MCF 10A (cell line): ENCODE measurements at regions of chr2 and their contacts with region 1.

Region 1: DNA sequence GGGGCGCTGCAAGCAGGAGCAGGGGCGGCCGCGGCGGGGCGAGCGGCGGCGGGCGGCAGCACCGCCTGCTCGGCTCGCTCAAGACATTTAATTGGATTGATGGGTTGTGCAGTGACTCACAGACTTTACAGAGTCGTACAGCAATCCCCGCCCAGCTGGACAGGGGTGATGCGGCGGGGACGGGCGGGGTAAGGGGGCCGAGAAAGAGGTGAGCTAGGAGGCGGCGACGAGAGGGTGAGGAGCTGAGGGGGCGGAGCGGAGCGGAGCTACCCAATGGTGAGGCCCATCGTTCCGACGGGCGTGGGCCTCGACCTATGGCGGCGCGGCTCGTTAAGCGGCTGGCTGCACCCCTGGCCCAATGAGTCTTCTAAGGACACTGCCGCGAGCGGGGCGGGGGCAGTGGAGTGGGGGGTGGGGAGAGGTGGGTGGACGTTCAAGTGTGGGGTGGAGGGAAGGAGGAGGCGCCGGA is 97.1 kb upstream of the SERTAD2 start:
- DNase-seq: peak; percentile 99
- H3K4me3 Mint-ChIP-seq: peak overlapping the region; percentile 87
- H3K27ac Mint-ChIP-seq: no peak overlapping the region
- H3K4me1 Mint-ChIP-seq: peaks cover 21% of the 10 kb centered on the region
- H3K27me3 Mint-ChIP-seq: no peaks in the 10 kb centered on the region
- CTCF ChIP-seq: no peak

Region 2: DNA sequence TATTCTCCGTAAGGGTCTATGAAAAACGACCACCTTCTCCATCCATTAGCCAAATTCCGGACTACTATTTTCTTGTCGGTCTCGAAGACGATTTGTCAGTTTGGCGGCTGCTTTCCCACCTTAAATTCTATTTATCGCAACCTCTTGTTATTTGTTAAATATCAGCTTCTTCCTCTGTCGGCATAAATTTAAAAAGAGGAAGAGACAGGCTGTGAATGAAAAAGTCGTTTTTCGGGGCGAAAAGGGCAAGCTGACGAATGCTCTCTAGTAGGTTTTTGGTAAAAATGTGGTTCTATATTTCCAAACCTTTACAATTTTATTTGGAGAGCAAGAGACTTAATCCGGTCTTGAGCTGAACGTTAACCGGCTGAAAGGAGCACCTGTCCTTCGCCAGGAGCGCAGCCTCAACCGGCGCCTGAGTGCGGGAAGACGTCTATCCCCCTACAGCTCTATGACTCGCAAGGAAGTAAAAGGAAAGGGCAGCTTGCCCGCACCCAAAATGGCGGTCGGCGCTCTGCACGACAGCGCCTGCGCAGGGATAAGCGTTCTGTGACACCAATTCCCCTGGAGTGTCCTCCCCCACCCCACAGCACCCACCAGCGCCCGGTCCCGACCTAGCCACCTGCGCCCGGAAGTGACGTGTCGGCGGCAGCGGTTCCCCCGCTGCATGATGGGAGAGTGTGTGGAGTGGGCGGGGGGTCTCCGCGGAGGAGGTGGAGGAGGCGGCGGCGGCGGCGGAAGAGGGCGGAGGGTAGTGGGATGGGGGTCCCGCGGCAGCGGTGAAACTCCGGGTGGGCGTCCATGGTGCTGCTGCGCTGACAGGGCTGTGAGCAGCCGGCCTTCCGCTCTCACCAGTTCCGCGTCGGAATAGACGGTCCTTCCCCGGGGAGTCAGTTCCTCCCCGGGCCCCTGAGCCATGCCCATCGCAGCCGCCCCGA is 226.9 kb before region 1 on chr2 and contains the start of gene AFTPH:
- CTCF ChIA-PET with region 1: interaction called, 4 read pairs
- POLR2A ChIA-PET with region 1: interaction called, 44 read pairs
- intact Hi-C with region 1: loop called (anchors 10 kb)
- DNase-seq: peak; percentile 99
- H3K4me3 Mint-ChIP-seq: peak within 1 kb of the TSS; percentile 83
- H3K27ac Mint-ChIP-seq: peak within 1 kb of the TSS; percentile 94
- H3K4me1 Mint-ChIP-seq: peaks cover 8% of the 10 kb centered on the region
- H3K27me3 Mint-ChIP-seq: no peaks in the 10 kb centered on the region
- CTCF ChIP-seq: no peak
- total RNA-seq, gene AFTPH: 24.2 and 24.7 TPM in 2 replicates

Region 3: GRCh38 chr2:64644177-64645004 is 106.5 kb before region 1 on chr2:
- CTCF ChIA-PET with region 1: interaction called, 44 read pairs
- POLR2A ChIA-PET with region 1: interaction called, 724 read pairs
- intact Hi-C with region 1: loop called (anchors 1 kb)
- DNase-seq: peak; percentile 64
- H3K4me3 Mint-ChIP-seq: peak overlapping the region; percentile 78
- H3K27ac Mint-ChIP-seq: peak overlapping the region; percentile 96
- H3K4me1 Mint-ChIP-seq: peaks cover 32% of the 10 kb centered on the region
- H3K27me3 Mint-ChIP-seq: no peaks in the 10 kb centered on the region
- CTCF ChIP-seq: no peak

Region 4: DNA sequence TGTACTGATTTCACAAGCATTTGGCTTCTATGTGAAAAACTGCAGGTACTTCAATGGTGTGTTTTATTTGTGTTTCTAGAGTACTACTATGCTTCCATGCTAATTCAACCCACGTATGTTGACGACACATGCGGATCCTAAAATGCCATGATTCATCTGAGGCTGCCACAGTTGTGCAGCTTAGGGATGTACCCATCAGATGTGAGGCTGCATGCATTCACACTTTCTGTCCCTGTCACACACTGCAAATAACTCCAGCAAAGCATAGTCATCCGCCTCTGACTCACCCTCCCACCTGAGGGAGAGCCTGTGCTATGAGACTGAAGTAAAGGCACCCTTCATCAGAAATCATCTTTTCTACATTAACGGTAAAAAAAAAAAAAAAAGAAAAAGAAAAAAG is 75.0 kb before region 1 on chr2:
- CTCF ChIA-PET with region 1: no interaction called
- POLR2A ChIA-PET with region 1: interaction called, 46 read pairs
- intact Hi-C with region 1: no loop called
- DNase-seq: peak; percentile 56
- H3K4me3 Mint-ChIP-seq: no peak overlapping the region
- H3K27ac Mint-ChIP-seq: no peak overlapping the region
- H3K4me1 Mint-ChIP-seq: peaks cover 5% of the 10 kb centered on the region
- H3K27me3 Mint-ChIP-seq: no peaks in the 10 kb centered on the region
- CTCF ChIP-seq: no peak

Region 5: DNA sequence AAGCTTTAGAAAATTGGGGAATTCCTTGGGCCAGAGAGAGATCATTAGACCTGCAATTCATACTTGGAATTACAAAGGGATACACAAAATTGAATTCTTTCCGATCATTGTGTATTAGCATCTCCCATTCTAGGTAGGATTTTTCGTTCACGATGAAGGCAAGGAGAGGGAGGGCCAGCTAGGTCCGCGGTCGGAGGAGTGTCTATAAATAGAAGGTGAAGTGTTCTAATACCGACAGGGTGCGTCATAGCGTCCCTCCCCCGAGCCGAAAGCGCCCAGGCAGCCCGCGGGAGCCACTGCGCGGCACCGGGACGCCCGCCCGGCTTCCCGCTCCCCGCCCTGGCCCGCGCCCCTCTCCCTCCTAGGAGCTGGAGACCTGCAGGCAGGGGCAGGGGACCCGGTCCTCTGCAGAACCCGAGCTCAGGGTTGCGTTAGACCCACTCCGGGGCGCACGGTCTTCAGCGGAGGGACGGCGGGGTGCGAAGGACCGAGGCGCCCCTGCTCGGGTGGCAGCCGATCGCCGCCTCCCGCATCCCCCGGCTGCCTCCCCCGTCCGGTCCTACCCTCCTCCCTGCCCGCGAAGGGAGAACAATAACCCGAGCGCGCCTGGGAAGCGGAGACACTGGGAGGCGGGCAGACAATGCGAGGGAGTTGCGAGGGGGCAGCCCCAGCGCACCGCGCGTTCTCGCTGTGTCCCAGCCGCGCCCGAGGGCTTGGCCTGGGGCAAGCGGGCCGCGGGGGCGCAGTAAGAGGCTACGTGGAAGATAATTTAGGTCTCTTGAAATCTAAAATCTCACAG is 17.0 kb after region 1 on chr2:
- CTCF ChIA-PET with region 1: interaction called, 5 read pairs
- POLR2A ChIA-PET with region 1: interaction called, 79 read pairs
- intact Hi-C with region 1: loop called (anchors 1 kb)
- DNase-seq: peak; percentile 82
- H3K4me3 Mint-ChIP-seq: peak overlapping the region; percentile 74
- H3K27ac Mint-ChIP-seq: peak overlapping the region; percentile 87
- H3K4me1 Mint-ChIP-seq: peaks cover 31% of the 10 kb centered on the region
- H3K27me3 Mint-ChIP-seq: no peaks in the 10 kb centered on the region
- CTCF ChIP-seq: no peak

Region 6: DNA sequence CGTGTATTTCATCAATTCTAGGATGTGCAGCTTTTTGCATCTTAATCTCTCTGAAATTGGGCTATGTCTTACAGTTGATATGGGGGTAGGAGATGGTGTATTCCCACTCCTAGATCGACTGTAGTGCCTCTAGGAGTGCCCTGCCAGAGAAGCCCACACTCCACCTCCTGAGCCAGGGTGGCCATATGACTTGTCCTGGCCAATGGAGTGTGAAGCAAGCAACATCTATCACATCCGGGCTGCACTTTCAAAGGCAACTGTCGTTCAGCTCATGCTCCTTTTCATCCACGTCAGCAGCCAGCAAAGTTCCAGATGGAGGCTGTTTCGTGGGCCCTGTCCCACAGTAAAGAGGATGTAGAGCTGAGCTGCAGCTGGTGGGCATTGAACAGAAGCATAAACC is 89.0 kb after region 1 on chr2:
- CTCF ChIA-PET with region 1: interaction called, 3 read pairs
- POLR2A ChIA-PET with region 1: interaction called, 63 read pairs
- intact Hi-C with region 1: loop called (anchors 2 kb)
- DNase-seq: no peak
- H3K4me3 Mint-ChIP-seq: no peak overlapping the region
- H3K27ac Mint-ChIP-seq: no peak overlapping the region
- H3K4me1 Mint-ChIP-seq: peaks cover 41% of the 10 kb centered on the region
- H3K27me3 Mint-ChIP-seq: no peaks in the 10 kb centered on the region
- CTCF ChIP-seq: no peak

Region 7: DNA sequence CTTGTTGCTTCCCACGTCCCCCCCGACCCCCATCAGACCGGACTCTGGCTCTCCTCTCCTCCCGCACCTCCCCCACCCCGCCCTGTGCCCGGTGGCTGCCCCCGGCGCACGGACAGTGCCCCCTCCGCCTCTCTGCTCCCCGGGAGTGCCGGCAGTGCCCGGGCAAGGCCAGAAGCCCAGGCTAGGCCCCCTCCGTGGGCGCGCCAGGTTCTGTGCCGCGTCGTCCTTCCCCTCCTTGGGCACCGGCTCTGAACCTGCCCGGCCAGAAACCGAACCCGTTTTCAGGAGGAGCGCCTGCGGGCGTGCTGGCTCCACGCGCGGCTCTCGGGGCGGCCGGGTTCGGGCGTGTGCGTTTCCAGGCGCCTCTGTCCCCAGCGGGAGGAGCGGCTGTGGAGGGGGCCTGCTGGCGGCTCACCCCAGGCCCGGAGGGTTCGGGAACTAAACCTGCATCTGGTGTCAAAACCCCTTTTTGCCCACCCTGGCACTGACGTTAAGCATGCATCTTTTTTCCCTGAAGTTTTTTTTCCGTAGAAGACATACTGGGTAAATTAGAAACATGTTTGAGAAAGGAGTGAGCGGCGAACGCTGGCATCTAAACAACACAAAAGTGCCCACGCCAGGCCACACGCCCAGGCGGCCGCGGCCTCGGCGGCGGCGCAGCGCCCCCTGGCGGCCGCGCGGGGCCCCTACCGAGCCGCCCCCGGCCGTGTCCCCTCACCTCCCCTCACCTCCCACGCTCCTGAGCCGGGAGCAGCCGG is 114.4 kb after region 1 on chr2:
- CTCF ChIA-PET with region 1: interaction called, 5 read pairs
- POLR2A ChIA-PET with region 1: interaction called, 109 read pairs
- intact Hi-C with region 1: loop called (anchors 1 kb)
- DNase-seq: peak; percentile 68
- H3K4me3 Mint-ChIP-seq: peak overlapping the region; percentile 64
- H3K27ac Mint-ChIP-seq: no peak overlapping the region
- H3K4me1 Mint-ChIP-seq: peaks cover 7% of the 10 kb centered on the region
- H3K27me3 Mint-ChIP-seq: no peaks in the 10 kb centered on the region
- CTCF ChIP-seq: peak; percentile 86